Activated B cell treated with CpG ODN at 0.5 μM for 24 hours (primary cell): ENCODE measurements at regions of chr1 and their contacts with region 1.

Region 1: DNA sequence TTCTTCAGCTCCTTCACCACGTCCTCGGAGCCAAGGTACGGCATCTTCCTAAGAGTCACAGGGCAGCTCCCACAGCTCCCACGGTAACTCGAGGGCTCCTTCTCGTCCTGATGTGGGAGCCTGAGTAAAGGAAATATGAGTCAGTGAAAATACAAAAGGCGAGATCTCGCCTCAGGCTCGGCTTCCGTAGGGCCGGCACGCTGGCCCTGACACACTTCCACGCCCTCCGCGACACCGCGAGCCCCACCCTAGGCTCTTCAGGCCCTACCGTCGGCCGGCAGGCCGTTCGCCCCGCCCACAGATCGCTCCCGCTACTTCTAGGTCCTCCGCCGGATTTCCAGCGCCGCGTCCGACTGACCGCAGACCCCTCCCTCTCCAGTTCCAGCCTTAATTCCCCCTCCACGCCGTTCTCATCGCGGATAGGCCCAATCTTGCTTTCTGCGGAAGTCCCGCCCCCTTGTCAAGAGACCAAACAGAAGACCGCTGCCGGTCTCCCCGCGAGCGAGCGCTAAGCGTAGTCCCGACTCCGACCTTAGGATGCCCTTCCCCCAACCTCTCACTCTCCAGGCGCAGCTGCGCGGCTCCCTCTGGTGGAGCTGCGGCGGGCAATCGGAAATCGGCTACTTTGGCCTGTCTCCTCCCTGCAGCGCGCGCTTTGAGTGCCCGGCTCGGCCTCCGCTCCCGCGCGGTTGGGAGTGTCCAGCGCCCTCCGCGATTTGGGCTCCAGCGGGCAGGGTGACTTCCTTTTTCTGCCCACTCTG is at the starts of genes AP4B1 and DCLRE1B:
- DNase-seq: peak; percentile 89
- ATAC-seq: peak; percentile 91
- H3K4me3 Mint-ChIP-seq: peak within 1 kb of the TSS; percentile 94
- H3K27ac Mint-ChIP-seq: peak within 1 kb of the TSS; percentile 95
- H3K4me1 Mint-ChIP-seq: peaks cover 51% of the 10 kb centered on the region
- H3K27me3 Mint-ChIP-seq: no peaks in the 10 kb centered on the region
- CTCF ChIP-seq: no peak
- total RNA-seq, gene AP4B1: 48.5 and 69.9 TPM in 2 replicates
- total RNA-seq, gene DCLRE1B: 5.4 and 6.0 TPM in 2 replicates

Region 2: GRCh38 chr1:113859478-113860175 is 45.2 kb before region 1 on chr1:
- CTCF ChIA-PET with region 1: interaction called, 10 read pairs
- POLR2A ChIA-PET with region 1: interaction called, 35 read pairs
- intact Hi-C with region 1: loop called (anchors 1 kb)
- DNase-seq: no peak
- ATAC-seq: peak; percentile 84
- H3K4me3 Mint-ChIP-seq: peak overlapping the region; percentile 51
- H3K27ac Mint-ChIP-seq: peak overlapping the region; percentile 95
- H3K4me1 Mint-ChIP-seq: peaks cover 66% of the 10 kb centered on the region
- H3K27me3 Mint-ChIP-seq: no peaks in the 10 kb centered on the region
- CTCF ChIP-seq: no peak

Region 3: GRCh38 chr1:113871597-113872113 is 33.2 kb before region 1 on chr1 and contains the start of gene PTPN22:
- CTCF ChIA-PET with region 1: interaction called, 5 read pairs
- POLR2A ChIA-PET with region 1: interaction called, 11 read pairs
- intact Hi-C with region 1: loop called (anchors 1 kb)
- DNase-seq: peak; percentile 39
- ATAC-seq: peak; percentile 96
- H3K4me3 Mint-ChIP-seq: peak within 1 kb of the TSS; percentile 85
- H3K27ac Mint-ChIP-seq: peak within 1 kb of the TSS; percentile 95
- H3K4me1 Mint-ChIP-seq: peaks cover 77% of the 10 kb centered on the region
- H3K27me3 Mint-ChIP-seq: no peaks in the 10 kb centered on the region
- CTCF ChIP-seq: no peak
- total RNA-seq, gene PTPN22: 25.5 and 26.1 TPM in 2 replicates

Region 4: GRCh38 chr1:114282751-114283403 is 378.0 kb after region 1 on chr1:
- CTCF ChIA-PET with region 1: no interaction called
- POLR2A ChIA-PET with region 1: no interaction called
- intact Hi-C with region 1: loop called (anchors 10 kb)
- DNase-seq: peak; percentile 56
- ATAC-seq: peak; percentile 74
- H3K4me3 Mint-ChIP-seq: no peak overlapping the region
- H3K27ac Mint-ChIP-seq: no peak overlapping the region
- H3K4me1 Mint-ChIP-seq: no peaks in the 10 kb centered on the region
- H3K27me3 Mint-ChIP-seq: peaks cover 2% of the 10 kb centered on the region
- CTCF ChIP-seq: no peak